ENCODE measurements at regions of chr21 and their contacts with region 1.

Region 1: DNA sequence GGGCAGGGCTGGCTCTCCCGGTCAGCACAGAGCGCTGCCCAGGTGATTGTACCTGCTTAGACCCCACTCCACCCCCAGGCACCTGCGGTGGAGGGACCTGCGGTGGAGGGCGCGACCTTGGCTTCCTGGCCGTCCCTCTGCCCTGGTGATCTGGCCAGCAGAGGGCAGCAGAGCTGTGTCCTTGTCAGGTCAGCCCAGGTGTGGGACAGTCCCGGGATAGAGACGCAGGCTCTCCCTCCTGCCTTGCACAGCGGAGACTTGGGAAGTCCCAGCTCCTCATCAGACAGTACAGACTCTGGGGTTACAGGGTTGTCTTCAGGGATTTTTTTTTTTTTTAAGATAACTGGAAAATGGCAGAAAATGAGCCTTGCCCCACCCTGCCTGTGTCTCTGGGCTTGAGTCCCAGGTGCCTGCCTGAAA is 10.0 kb downstream of the SLX9 start:
- DNase-seq: peak; percentile 35
- ATAC-seq: peak; percentile 85
- H3K4me3 ChIP-seq: no peak overlapping the region
- H3K27ac ChIP-seq: no peak overlapping the region
- H3K4me1 ChIP-seq: peaks cover 33% of the 10 kb centered on the region
- H3K27me3 ChIP-seq: no peaks in the 10 kb centered on the region
- CTCF ChIP-seq: peak; percentile 90

Region 2: DNA sequence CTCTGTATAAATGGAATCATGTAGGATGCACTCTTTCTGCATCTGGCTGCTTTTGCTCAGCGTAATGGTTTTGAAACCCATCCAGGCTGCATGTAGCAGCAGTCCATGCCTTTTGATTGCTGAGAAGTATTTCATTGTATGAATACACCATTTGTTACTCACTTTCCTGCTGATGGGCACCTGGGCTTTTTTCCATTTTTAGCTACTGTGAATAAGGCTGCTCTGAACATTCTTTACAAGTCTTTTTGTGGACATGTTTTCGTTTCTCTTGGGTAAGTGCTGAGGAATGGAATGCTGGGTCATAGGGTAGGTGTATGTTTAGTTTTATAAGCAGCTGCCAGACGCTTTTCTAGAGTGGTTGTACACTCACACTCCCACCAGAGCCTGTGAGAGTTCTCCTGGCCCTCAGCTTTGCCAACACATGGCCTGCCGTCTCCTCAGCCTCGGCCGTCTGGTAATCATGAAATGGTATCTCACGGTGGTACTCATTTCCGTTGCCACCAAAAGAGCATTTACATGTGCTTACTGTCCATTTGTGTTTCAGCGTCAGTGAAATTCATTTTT is 12.7 kb after region 1 on chr21:
- CTCF ChIA-PET with region 1: interaction called, 12 read pairs
- POLR2A ChIA-PET with region 1: no interaction called
- in situ Hi-C with region 1: no loop called
- intact Hi-C with region 1: no loop called
- DNase-seq: no peak
- ATAC-seq: no peak
- H3K4me3 ChIP-seq: no peak overlapping the region
- H3K27ac ChIP-seq: no peak overlapping the region
- H3K4me1 ChIP-seq: no peaks in the 10 kb centered on the region
- H3K27me3 ChIP-seq: no peaks in the 10 kb centered on the region
- CTCF ChIP-seq: no peak

Region 3: GRCh38 chr21:45129189-45129923 is 179.6 kb after region 1 on chr21:
- CTCF ChIA-PET with region 1: interaction called, 17 read pairs
- POLR2A ChIA-PET with region 1: no interaction called
- in situ Hi-C with region 1: no loop called
- intact Hi-C with region 1: loop called (anchors 2 kb)
- DNase-seq: no peak
- ATAC-seq: no peak
- H3K4me3 ChIP-seq: no peak overlapping the region
- H3K27ac ChIP-seq: no peak overlapping the region
- H3K4me1 ChIP-seq: no peaks in the 10 kb centered on the region
- H3K27me3 ChIP-seq: no peaks in the 10 kb centered on the region
- CTCF ChIP-seq: no peak